ENCODE measurements at regions of chr9 and their contacts with region 1.

Region 1: DNA sequence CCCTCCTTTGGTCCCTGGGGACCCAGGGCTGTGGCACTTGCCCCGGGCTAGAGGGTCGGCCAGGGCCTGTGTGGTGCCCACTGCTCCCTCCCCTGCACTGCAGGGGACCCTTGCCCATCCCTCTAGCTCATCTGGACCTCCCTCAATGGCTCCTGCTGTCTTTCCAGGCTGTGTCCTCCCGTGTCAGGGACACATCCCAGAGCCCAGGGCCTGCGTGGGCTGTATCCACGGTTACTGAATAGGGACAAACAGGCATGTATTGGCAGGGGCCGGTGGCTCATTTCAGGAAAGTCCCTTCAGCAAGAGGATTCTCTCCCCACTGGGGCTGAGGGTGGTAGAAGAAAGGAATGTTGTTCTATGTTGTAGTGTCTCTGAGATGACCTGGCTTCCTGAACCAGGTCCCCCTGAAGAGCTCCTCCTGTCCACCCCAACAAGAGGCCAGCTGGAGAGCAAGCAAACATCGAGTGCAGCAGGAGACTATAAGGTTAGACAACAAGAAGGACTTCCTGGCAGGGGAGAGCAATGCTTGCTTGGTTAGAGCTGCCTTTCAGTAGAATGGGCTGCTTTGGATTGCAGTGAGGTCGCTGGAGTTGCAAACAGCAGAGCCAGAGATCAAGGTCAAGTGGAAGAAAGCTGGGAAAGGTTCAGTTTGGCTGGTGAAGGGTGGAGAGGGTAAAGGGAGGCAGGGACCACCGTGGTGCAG is 1.0 kb upstream of the CRB2 start:
- DNase-seq: no peak
- ATAC-seq: no peak
- H3K4me3 ChIP-seq: no peak overlapping the region
- H3K27ac ChIP-seq: no peak overlapping the region
- H3K4me1 ChIP-seq: no peaks in the 10 kb centered on the region
- H3K27me3 ChIP-seq: no peaks in the 10 kb centered on the region
- CTCF ChIP-seq: no peak

Region 2: DNA sequence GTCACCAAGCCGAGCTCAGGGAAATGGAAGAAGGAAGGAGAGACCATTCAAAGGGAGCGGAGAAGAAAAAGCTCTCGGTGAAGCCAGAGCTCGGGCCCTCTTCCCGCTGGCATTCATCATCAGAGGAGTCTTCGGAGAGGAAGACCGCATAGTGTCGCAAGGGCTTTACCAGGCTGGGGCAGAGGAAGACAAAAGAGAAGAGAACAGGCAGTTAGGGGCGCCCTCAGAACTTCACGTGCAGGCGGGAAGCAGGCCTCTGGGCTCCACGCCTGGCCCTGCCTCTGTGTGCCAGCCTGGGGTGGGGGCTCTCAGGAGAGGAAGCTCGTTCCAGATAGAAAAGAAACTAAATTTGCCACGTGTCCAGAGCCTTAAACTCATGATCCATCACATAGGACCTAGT is 32.7 kb after region 1 on chr9:
- CTCF ChIA-PET with region 1: interaction called, 10 read pairs
- POLR2A ChIA-PET with region 1: interaction called, 12 read pairs
- in situ Hi-C with region 1: no loop called
- intact Hi-C with region 1: loop called (anchors 2 kb)
- DNase-seq: no peak
- ATAC-seq: no peak
- H3K4me3 ChIP-seq: no peak overlapping the region
- H3K27ac ChIP-seq: no peak overlapping the region
- H3K4me1 ChIP-seq: no peaks in the 10 kb centered on the region
- H3K27me3 ChIP-seq: no peaks in the 10 kb centered on the region
- CTCF ChIP-seq: no peak

Region 3: DNA sequence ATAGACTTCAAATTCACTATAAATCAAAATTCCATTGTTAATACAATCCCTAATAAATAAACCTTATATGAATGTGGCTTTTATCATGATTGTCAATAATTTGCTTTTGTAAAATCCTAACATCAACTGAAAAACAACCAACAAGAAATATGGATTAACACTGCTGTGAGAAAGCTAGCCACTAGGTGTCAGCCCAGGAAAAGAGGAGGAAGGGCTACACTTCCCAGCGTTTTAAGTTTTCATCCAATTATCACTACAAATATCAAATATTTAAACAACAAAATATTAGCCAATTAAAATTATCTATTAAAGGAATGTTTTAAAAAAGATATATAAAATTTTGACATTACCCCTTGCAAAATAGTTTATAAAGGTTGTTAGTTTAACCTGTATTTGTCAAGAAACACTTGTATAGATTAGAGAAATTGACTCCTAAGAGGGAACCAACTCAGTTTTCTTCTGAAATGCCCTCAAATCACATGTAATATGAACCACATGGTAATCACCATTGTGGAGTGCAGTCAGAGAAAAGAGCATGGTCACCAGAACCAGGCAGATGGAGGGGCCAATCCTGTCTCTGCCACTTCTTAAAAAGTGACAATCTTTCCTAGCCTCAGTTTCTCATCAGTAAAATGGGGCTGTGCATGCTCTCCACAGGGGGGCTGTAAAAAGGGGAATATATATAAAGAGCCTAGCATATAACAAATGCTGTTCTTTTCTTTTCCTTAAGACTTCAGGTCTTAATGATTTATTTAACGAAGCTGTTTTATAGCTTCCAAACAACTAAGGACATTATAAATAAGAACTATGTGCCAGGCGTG is 189.3 kb after region 1 on chr9:
- CTCF ChIA-PET with region 1: no interaction called
- POLR2A ChIA-PET with region 1: no interaction called
- in situ Hi-C with region 1: no loop called
- intact Hi-C with region 1: no loop called
- DNase-seq: peak; percentile 10
- ATAC-seq: no peak
- H3K4me3 ChIP-seq: no peak overlapping the region
- H3K27ac ChIP-seq: no peak overlapping the region
- H3K4me1 ChIP-seq: no peaks in the 10 kb centered on the region
- H3K27me3 ChIP-seq: no peaks in the 10 kb centered on the region
- CTCF ChIP-seq: peak; percentile 78; the same call in 1 of the 2 replicates